ENCODE measurements at regions of chr1 and their contacts with region 1.

Region 1: GRCh38 chr1:155250633-155251449 is 4.4 kb downstream of the ENTREP3 start:
- DNase-seq: peak; percentile 92 to 95
- H3K4me3 ChIP-seq: no peak overlapping the region
- H3K4me3 Mint-ChIP-seq: no peak overlapping the region
- H3K27ac Mint-ChIP-seq: peak overlapping the region; percentile 7
- H3K4me1 ChIP-seq: peaks cover 4% of the 10 kb centered on the region; the same call in 1 of the 2 replicates
- H3K4me1 Mint-ChIP-seq: peaks cover 22% of the 10 kb centered on the region
- H3K27me3 ChIP-seq: no peaks in the 10 kb centered on the region
- H3K27me3 Mint-ChIP-seq: no peaks in the 10 kb centered on the region
- CTCF ChIP-seq: peak; percentile 97 to 99

Region 2: DNA sequence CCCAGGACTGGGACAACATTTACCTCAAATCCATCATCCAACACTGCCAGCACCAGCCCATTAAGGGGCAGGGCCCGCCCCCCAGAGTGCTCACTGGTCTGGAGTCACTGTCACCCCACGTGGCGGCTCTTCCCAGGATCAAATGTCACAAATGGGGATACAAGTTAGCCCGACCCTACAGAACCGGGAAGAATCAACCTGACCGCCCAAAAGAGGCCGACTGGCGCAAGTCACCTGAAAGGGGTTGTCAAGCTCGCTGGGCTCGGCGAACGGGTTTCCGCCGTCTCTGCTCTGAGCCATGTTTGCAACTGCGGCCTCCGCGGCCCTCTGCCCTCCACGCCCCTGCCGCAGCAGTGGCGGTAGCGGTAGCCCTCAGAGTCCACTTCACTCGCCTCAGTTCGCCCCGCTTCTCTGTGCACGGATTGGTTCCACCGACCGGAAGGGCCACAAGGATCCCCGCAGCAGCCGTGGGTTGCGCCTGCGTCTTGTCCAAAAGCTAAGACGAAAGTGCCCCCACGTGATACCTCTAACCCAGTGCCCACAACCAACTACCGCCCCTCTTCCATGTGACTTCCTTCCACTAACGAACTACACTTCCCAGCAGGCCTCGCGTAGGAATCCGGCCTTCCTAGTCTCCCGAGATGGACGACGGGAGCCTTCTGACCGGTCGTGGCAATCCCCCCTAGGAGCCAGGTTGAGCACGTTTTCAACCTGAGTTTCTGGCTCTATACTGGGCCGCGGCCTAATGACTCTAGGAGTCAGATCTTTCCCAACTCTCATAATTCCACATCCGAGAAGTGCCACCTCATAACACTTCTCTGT is 11.2 kb after region 1 on chr1 and contains the start of gene SCAMP3:
- CTCF ChIA-PET with region 1: interaction called, 12 read pairs
- POLR2A ChIA-PET with region 1: interaction called, 4 read pairs
- intact Hi-C with region 1: no loop called
- DNase-seq: peak; percentile 94 to 97
- H3K4me3 ChIP-seq: peak within 1 kb of the TSS; percentile 65
- H3K4me3 Mint-ChIP-seq: peak within 1 kb of the TSS; percentile 95
- H3K27ac Mint-ChIP-seq: peak within 1 kb of the TSS; percentile 94
- H3K4me1 ChIP-seq: peaks cover 4% of the 10 kb centered on the region
- H3K4me1 Mint-ChIP-seq: peaks cover 23% of the 10 kb centered on the region
- H3K27me3 ChIP-seq: no peaks in the 10 kb centered on the region
- H3K27me3 Mint-ChIP-seq: no peaks in the 10 kb centered on the region
- CTCF ChIP-seq: no peak
- total RNA-seq, gene SCAMP3: 53.4 and 55.9 TPM in 2 replicates

Region 3: DNA sequence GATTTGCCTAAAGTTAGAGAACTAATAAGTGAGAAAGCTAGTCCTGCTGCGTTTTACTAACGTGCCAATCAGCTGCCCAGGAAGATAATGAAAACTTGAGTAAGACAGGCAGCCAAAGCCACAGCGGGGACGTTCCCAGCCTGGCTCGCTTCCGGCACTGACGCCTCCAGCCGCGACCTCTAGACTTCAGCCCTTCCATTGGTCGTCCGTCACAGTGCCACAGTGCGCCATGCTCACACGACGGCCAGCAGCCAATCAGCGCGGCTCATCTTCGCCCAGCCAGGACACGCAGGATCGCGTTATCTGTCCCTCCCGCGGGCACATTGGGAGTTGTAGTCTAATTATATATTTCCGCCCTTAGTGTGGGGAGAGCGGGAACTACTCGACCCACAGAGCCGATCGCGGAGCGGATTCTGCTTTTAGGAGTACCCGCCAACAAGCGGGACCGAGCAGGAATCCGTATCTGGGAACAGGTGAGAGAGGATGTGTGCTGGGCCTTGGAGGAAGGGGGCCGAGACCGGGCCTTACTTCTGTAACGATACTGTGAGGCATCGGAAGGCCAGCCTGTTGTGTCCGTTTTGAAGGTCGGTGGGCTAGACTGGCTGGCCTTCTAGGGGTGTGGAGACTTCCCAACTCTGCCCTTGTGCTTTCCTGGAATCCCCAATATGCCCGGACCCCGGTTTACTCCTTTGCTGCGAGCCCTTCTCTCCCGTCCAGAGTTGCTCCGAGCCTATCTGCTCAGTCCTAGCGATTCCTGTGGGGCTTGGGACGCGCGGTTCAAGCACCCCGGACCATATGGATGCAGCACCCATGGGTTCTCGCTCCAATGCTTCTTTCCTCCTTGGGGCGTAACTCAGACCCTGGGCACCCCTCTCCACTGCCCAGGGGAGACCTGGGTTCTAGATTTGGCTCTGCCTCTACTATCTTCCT is 57.9 kb after region 1 on chr1 and contains the start of gene FDPS:
- CTCF ChIA-PET with region 1: interaction called, 8 read pairs
- POLR2A ChIA-PET with region 1: no interaction called
- intact Hi-C with region 1: loop called (anchors 1 kb)
- DNase-seq: peak; percentile 97 to 99
- H3K4me3 ChIP-seq: peak within 1 kb of the TSS; percentile 77
- H3K4me3 Mint-ChIP-seq: peak within 1 kb of the TSS; percentile 96
- H3K27ac Mint-ChIP-seq: peak within 1 kb of the TSS; percentile 99
- H3K4me1 ChIP-seq: peaks cover 12% of the 10 kb centered on the region; the same call in 1 of the 2 replicates
- H3K4me1 Mint-ChIP-seq: peaks cover 12% of the 10 kb centered on the region
- H3K27me3 ChIP-seq: no peaks in the 10 kb centered on the region
- H3K27me3 Mint-ChIP-seq: no peaks in the 10 kb centered on the region
- CTCF ChIP-seq: no peak
- total RNA-seq, gene FDPS: 228 and 235 TPM in 2 replicates

Region 4: GRCh38 chr1:155591770-155592169 is 340.9 kb after region 1 on chr1:
- CTCF ChIA-PET with region 1: no interaction called
- POLR2A ChIA-PET with region 1: no interaction called
- intact Hi-C with region 1: loop called (anchors 2 kb)
- DNase-seq: peak in 1 of 2 experiments; percentile 45
- H3K4me3 ChIP-seq: no peak overlapping the region
- H3K4me3 Mint-ChIP-seq: no peak overlapping the region
- H3K27ac Mint-ChIP-seq: no peak overlapping the region
- H3K4me1 ChIP-seq: no peaks in the 10 kb centered on the region
- H3K4me1 Mint-ChIP-seq: no peaks in the 10 kb centered on the region
- H3K27me3 ChIP-seq: no peaks in the 10 kb centered on the region
- H3K27me3 Mint-ChIP-seq: no peaks in the 10 kb centered on the region
- CTCF ChIP-seq: peak; percentile 41 to 50

Measured in Caco-2 (cell line).